Breast epithelium (tissue), 4 donors: ENCODE measurements at regions of chr1 and their contacts with region 1.

Region 1: DNA sequence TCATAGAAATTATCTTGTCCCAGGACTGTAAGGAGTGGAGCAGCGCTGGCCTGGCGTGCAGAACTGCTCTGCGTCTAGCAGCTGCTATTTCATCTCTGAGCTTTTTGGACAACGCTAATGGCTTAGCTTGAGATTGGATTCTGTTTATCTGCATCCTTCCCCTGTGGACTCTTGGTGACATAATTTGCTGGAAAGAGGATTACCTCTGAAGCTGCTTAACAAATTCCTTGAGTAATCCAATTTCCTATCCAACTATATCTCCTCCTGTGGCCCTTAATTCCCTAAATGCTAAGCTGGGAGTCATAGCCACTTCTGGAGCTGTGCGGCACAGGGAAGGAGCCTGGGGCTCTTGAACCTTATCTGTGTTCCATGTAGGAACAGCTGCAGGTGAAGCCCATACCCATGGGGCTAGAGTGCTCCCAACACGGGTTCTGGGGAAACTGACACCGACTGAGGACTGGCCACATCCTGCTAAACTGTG is 43.2 kb downstream of the IL6R start:
- DNase-seq: no peak
- H3K4me3 ChIP-seq: no peak overlapping the region
- H3K27ac ChIP-seq: no peak overlapping the region
- H3K4me1 ChIP-seq: peaks cover 0 to 5% of the 10 kb centered on the region in 2 donors
- H3K27me3 ChIP-seq: no peaks in the 10 kb centered on the region
- CTCF ChIP-seq: no peak
- POLR2A ChIP-seq: no peak

Region 2: GRCh38 chr1:154404984-154405761 is 43.2 kb before region 1 on chr1 and contains the start of gene IL6R:
- intact Hi-C with region 1: no loop called
- DNase-seq: peak; percentile 92 to 95
- H3K4me3 ChIP-seq: peak within 1 kb of the TSS; percentile 79 to 87 (median 85)
- H3K27ac ChIP-seq: peak within 1 kb of the TSS; percentile 96 to 99
- H3K4me1 ChIP-seq: peaks cover 5 to 23% of the 10 kb centered on the region in 2 donors
- H3K27me3 ChIP-seq: no peaks in the 10 kb centered on the region
- CTCF ChIP-seq: peak; percentile 7 to 68 (median 53)
- POLR2A ChIP-seq: peak; percentile 83
- total RNA-seq, gene IL6R: 23.6 to 26.8 (median 24.0) TPM

Region 3: DNA sequence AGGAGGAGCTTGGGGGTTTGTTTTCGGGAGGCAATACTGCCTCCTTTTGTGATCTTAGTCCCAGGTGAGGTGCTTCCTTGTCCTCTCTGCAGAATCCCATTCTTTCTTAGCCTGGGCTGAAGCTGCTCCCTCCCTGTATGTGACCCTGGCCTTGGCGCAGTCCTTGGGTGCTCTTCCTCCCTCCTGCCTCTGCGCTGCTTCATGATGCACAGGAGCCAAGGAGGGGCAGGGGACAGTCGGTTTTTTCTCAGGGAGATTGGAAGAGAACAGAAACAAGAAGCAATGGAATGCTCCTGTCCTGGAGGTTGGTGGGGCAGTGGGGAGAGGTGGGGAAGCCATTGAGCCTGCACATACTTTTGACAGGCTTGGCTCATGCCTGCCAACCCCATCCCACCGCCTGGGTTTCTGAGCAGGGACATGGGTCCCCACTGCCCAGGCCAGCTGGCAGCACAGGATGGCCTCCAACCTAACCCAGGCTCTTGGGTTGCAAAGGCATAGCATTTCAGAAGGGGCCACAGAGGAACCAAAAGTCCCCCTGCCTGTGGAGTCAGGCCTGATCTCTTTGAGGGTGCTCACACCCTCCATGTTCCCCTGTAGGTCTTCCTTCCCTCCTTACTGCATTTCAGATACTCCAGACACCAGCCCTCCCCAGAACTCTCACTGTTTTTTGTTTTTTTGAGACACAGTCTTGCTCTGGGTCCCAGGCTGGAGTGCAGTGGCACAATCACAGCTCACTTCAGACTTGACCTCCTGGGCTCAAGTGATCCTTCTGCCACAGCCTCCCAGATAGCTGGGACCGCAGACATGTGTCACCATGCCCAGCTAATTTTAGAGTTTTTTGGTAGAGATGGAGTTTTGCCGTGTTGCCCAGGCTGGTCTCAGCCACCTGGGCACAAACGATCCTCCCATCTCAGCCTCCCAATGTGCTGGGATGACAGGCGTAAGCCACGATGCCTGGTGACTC is 27.1 kb before region 1 on chr1:
- intact Hi-C with region 1: loop called (anchors 1 kb)
- DNase-seq: no peak
- H3K4me3 ChIP-seq: no peak overlapping the region
- H3K27ac ChIP-seq: peak overlapping the region; percentile 94 to 96
- H3K4me1 ChIP-seq: peaks cover 3 to 59% of the 10 kb centered on the region in 2 donors
- H3K27me3 ChIP-seq: no peaks in the 10 kb centered on the region
- CTCF ChIP-seq: no peak
- POLR2A ChIP-seq: no peak

Region 4: GRCh38 chr1:154474802-154475201 is 26.4 kb after region 1 on chr1:
- intact Hi-C with region 1: no loop called
- DNase-seq: no peak
- H3K4me3 ChIP-seq: no peak overlapping the region
- H3K27ac ChIP-seq: no peak overlapping the region
- H3K4me1 ChIP-seq: no peaks in the 10 kb centered on the region
- H3K27me3 ChIP-seq: no peaks in the 10 kb centered on the region
- CTCF ChIP-seq: no peak
- POLR2A ChIP-seq: no peak